ENCODE measurements at regions of chr11 and their contacts with region 1.

Region 1: GRCh38 chr11:113305440-113306336 is 8.7 kb upstream of the TTC12 start:
- DNase-seq: peak; percentile 79
- H3K4me3 Mint-ChIP-seq: no peak overlapping the region
- H3K27ac Mint-ChIP-seq: no peak overlapping the region
- H3K4me1 Mint-ChIP-seq: no peaks in the 10 kb centered on the region
- H3K27me3 Mint-ChIP-seq: no peaks in the 10 kb centered on the region

Region 2: DNA sequence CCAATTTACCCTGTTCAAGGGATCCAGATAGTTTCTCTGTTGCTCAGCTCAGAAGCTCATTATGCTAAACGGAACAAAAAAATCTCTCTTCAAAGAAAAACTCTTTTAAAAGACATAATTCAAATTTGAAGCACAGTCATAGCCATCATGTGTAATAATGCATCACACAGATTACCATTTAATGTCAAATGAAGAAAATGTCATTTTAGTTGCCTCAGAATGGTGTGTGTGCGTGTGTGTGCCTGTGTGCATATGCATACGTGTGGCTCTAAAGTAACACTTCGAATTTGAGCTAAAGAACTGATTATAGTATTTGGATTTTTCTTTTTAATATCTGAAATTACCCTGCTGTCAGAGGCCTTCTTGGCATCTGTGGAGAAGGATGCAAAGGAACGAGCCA is 18.6 kb after region 1 on chr11:
- CTCF ChIA-PET with region 1: no interaction called
- intact Hi-C with region 1: no loop called
- DNase-seq: no peak
- H3K4me3 Mint-ChIP-seq: no peak overlapping the region
- H3K27ac Mint-ChIP-seq: no peak overlapping the region
- H3K4me1 Mint-ChIP-seq: no peaks in the 10 kb centered on the region
- H3K27me3 Mint-ChIP-seq: no peaks in the 10 kb centered on the region

Region 3: DNA sequence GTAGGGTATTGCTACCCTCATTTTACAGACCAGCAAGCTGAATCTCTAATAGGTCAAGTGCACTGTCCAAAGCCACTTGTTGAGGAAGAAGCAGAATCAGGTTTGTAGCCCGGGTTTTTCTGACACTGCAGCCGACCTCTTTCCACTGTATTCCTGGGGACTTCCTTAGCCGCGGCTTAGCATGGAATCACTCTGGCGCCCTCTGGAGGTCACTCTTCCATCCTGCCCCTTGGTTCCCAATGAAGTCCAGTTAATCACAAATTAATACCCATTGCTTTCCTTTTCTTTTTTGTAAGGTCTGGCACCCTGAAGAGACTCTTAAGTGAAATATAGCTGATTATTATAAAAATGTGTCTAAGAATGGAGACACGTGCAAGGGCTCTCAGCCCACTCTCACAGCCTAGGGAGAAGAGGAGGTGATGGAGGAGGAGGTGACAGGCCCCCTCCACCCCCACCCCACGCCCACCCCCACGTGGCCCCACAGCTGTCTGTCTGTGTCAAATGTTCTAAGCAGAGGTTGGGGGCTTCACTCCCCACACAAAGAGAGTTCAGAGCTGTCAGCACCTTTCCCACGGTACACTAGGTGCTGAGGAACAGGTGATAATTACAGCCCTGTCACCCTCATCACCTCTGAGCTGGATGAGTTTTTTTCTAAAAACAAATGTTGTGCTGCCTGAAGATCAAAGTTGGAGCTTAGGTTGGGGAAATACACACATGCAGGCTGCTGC is 227.2 kb after region 1 on chr11:
- CTCF ChIA-PET with region 1: interaction called, 22 read pairs
- intact Hi-C with region 1: loop called (anchors 1 kb)
- DNase-seq: peak; percentile 76
- H3K4me3 Mint-ChIP-seq: no peak overlapping the region
- H3K27ac Mint-ChIP-seq: no peak overlapping the region
- H3K4me1 Mint-ChIP-seq: no peaks in the 10 kb centered on the region
- H3K27me3 Mint-ChIP-seq: peaks cover 20% of the 10 kb centered on the region

Region 4: GRCh38 chr11:113730887-113731726 is 425.4 kb after region 1 on chr11:
- CTCF ChIA-PET with region 1: no interaction called
- intact Hi-C with region 1: loop called (anchors 1 kb)
- DNase-seq: peak; percentile 19
- H3K4me3 Mint-ChIP-seq: no peak overlapping the region
- H3K27ac Mint-ChIP-seq: no peak overlapping the region
- H3K4me1 Mint-ChIP-seq: peaks cover 1% of the 10 kb centered on the region
- H3K27me3 Mint-ChIP-seq: no peaks in the 10 kb centered on the region

Region 5: DNA sequence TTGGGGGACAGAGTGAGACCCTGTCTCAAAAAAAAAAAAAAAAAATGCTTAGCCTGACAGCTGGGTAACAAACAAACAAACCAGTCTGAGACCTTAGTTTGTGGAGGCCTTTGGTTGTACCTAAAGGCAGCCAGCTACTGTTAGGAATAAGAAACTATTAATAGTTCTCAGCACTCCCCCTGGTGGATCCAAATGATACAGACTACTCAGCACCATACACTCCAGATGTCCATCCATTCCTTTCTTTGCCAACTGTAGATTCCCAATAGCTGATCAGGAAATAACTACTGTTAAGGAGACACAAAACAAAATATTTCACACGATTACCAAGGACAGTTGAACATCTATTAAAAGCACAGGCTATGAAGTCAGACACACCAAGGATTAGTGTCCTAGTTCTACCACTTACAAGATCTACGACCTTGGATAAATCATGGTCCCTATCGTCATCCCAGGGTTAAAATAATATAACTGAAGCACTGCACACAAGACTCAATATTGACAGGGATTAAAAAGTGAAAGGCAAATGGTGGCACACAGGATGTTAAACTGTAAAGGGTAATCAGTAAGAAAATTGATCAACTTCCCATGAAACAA is 491.1 kb after region 1 on chr11:
- CTCF ChIA-PET with region 1: interaction called, 6 read pairs
- intact Hi-C with region 1: loop called (anchors 1 kb)
- DNase-seq: no peak
- H3K4me3 Mint-ChIP-seq: no peak overlapping the region
- H3K27ac Mint-ChIP-seq: no peak overlapping the region
- H3K4me1 Mint-ChIP-seq: no peaks in the 10 kb centered on the region
- H3K27me3 Mint-ChIP-seq: no peaks in the 10 kb centered on the region

Region 6: DNA sequence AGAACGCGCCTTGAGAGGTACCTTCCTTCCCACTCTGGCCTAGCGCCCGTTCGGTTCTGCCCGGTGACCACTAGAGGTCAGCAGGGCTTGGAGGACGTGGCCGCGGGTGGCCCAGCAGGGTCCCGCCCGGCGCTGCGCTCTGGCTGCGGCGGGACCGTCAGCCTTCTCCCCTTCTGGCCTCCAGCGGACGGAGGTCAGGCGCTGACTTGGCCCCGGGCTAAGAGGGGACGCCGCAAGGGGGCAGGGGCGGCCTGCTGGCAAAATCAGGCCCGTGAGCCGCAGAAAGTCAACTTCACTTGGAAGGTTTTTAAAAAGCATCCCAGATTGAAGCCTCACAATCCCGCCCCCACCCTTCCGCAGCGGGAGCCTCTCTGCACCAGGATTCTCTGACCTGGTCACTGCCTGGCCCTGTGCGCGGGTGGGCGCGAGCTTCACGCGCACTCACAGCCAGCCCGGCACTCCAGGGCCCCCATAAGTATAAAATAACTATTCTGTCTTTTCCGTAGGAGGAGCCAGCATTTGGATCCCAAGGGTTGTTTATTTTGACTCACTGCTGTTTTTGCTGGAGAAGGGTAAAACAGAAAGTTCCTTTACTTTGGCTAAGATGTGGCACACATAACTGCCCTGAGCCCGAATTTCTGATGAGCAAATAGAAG is 730.6 kb after region 1 on chr11:
- CTCF ChIA-PET with region 1: no interaction called
- intact Hi-C with region 1: loop called (anchors 5 kb)
- DNase-seq: peak; percentile 67
- H3K4me3 Mint-ChIP-seq: no peak overlapping the region
- H3K27ac Mint-ChIP-seq: no peak overlapping the region
- H3K4me1 Mint-ChIP-seq: peaks cover 2% of the 10 kb centered on the region
- H3K27me3 Mint-ChIP-seq: no peaks in the 10 kb centered on the region